Activated CD4-positive, alpha-beta T cell treated with anti-CD3 and anti-CD28 coated beads, Interleukin-2, amount 10 ng/mL, durations not matched to agents 7 days and 5 days (primary cell): ENCODE measurements at regions of chr2 and their contacts with region 1.

Region 1: GRCh38 chr2:72887754-72888437 is 688 bp downstream of the SPR start:
- DNase-seq: peak; percentile 47
- H3K4me3 Mint-ChIP-seq: peak overlapping the region; percentile 63
- H3K27ac Mint-ChIP-seq: no peak overlapping the region
- H3K4me1 Mint-ChIP-seq: peaks cover 3% of the 10 kb centered on the region
- H3K27me3 Mint-ChIP-seq: peaks cover 52% of the 10 kb centered on the region

Region 2: DNA sequence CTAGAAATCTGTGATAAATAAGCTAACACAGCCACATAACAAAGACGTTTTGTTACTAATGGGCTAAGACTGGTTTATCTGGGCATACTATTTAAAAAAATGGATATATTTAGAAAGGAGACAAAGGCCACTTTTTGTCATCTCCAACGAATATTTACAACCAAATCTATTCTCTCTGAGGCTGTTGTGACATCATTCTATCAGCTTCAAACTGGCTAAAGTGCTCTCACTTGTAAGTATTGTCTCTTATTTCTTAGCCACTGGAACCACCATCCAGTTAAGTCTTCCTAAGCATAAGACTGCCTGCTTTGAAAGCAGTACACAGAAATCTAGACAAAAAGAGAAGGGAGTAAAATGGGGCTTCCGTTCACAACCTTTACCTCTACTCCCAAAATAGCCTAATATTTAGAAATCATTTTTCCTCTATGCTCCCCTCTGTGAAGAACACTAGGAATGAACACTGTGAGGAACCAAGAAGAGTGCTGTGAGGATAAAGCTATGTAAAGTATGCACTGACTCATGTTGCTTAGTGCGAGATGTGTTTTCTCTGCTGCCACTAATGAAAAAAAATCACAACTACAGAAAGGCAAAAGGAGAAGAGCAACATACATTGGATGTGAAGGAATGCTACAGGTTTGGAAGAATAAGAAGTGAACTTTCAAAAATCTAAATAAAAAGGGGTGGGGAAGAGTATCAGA is 326.1 kb before region 1 on chr2:
- CTCF ChIA-PET with region 1: no interaction called
- POLR2A ChIA-PET with region 1: no interaction called
- DNase-seq: no peak
- H3K4me3 Mint-ChIP-seq: no peak overlapping the region
- H3K27ac Mint-ChIP-seq: no peak overlapping the region
- H3K4me1 Mint-ChIP-seq: peaks cover 9% of the 10 kb centered on the region
- H3K27me3 Mint-ChIP-seq: no peaks in the 10 kb centered on the region

Region 3: DNA sequence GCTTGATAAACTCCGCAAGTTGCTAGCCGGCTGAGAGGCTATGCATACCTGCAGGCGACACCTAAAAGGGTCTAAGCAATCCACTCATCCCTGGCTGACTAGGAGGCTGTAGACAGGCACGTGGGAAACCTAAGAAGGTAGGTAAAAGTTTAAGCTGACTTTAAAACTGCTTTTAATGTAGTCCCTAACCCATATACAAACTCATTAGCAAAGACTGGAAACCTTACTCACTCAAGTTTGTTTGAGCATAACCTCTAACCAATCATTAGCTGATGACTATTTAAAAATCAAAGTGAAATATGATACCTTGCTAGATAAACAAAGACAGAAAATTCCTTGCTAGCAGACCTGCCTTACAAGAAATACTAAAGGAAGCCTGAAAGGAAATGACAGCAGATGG is 168.5 kb before region 1 on chr2:
- CTCF ChIA-PET with region 1: no interaction called
- POLR2A ChIA-PET with region 1: no interaction called
- DNase-seq: no peak
- H3K4me3 Mint-ChIP-seq: no peak overlapping the region
- H3K27ac Mint-ChIP-seq: no peak overlapping the region
- H3K4me1 Mint-ChIP-seq: peaks cover 7% of the 10 kb centered on the region
- H3K27me3 Mint-ChIP-seq: no peaks in the 10 kb centered on the region

Region 4: GRCh38 chr2:72862239-72862988 is 25.5 kb before region 1 on chr2:
- CTCF ChIA-PET with region 1: interaction called, 10 read pairs
- POLR2A ChIA-PET with region 1: no interaction called
- DNase-seq: peak; percentile 88
- H3K4me3 Mint-ChIP-seq: peak overlapping the region; percentile 49
- H3K27ac Mint-ChIP-seq: no peak overlapping the region
- H3K4me1 Mint-ChIP-seq: peaks cover 11% of the 10 kb centered on the region
- H3K27me3 Mint-ChIP-seq: peaks cover 38% of the 10 kb centered on the region